Activated CD8-positive, alpha-beta T cell treated with anti-CD3 and anti-CD28 coated beads for 36 hours (primary cell): ENCODE measurements at regions of chr3 and their contacts with region 1.

Region 1: GRCh38 chr3:42831321-42831713 is 22.1 kb downstream of the ACKR2 start:
- DNase-seq: peak; percentile 91
- ATAC-seq: peak; percentile 90
- H3K4me3 Mint-ChIP-seq: no peak overlapping the region
- H3K27ac Mint-ChIP-seq: no peak overlapping the region
- H3K4me1 Mint-ChIP-seq: peaks cover 4% of the 10 kb centered on the region
- H3K27me3 Mint-ChIP-seq: peaks cover 6% of the 10 kb centered on the region
- CTCF ChIP-seq: peak; percentile 70

Region 2: DNA sequence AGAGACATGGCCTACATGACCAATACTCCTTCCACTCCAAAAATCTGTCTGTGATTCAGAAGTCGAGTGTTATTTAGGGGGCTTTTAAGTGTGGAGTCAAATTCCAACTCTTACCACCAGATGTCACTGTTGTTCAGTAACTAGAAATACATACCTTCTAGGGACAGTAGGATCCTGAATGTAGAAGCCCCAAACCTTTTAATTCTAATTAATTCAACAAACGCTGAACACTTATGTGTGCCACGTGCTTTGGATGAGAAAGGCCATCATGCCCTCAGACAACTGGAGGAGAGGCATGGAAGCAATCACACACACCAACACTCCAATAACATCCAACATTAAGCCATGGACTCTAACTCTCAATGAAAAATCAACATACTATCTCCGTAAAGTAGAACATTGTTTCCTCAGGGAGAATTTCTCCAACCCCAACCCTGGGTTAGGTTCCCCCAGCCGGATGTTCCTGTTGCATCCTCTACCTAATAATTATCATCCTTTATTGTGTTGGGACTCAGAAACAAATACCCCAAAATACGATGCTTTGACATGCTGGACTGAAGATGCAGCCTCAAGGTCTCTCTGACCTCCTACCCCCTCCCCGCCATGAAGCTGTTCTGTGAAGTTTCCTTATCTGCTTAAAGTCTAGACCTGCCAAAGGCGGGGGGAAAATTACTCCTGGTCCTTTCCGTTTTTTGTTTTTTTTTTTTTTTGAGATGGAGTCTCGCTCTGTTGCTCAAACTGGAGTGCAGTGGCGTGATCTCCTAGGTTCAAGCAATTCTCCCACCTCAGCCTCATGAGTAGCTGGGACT is 50.2 kb before region 1 on chr3:
- CTCF ChIA-PET with region 1: interaction called, 15 read pairs
- POLR2A ChIA-PET with region 1: no interaction called
- intact Hi-C with region 1: no loop called
- DNase-seq: peak; percentile 32
- ATAC-seq: peak; percentile 97
- H3K4me3 Mint-ChIP-seq: no peak overlapping the region
- H3K27ac Mint-ChIP-seq: no peak overlapping the region
- H3K4me1 Mint-ChIP-seq: no peaks in the 10 kb centered on the region
- H3K27me3 Mint-ChIP-seq: no peaks in the 10 kb centered on the region
- CTCF ChIP-seq: peak; percentile 80

Region 3: DNA sequence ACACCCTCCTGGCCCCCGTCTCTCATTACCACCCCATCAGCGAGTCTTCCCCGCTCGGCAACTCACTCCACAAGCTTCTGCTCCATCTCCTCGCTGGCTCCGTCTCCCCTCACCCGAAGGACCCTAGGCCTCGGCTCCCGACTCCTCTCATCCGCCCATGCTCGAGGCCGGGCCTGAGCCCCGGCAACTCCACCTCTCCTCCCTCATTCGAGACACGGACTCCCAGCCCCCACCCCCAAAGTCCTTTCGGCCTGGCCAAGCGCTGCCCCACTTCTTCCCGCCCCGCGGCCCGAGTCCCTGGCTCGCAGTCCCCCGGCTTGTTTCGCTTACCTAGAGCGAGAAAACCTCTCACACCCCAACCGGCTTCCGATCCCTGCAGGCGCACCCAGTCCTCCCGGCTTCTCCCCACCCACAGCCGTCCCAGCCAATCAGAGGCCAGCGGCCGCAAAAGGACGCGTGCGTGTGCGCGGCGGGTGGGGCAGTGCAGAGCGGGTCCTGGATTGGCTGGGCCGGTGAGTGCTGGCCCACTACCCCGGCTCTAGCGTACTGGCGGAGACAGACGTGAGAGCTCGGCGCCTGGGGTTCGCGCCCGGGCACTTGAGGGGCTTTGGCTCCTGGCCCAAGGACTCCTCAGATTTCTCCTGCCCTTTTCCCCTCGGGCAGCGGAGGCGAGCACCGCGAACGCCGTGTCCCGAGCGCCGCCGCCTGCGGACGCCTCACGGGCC is 27.0 kb before region 1 on chr3 and contains the start of gene HIGD1A:
- CTCF ChIA-PET with region 1: interaction called, 10 read pairs
- POLR2A ChIA-PET with region 1: no interaction called
- intact Hi-C with region 1: no loop called
- DNase-seq: peak; percentile 94
- ATAC-seq: peak; percentile 99
- H3K4me3 Mint-ChIP-seq: peak within 1 kb of the TSS; percentile 98
- H3K27ac Mint-ChIP-seq: peak within 1 kb of the TSS; percentile 90
- H3K4me1 Mint-ChIP-seq: peaks cover 37% of the 10 kb centered on the region
- H3K27me3 Mint-ChIP-seq: peaks cover 12% of the 10 kb centered on the region
- CTCF ChIP-seq: no peak
- total RNA-seq, gene HIGD1A: 58.4 to 60.5 TPM

Region 4: GRCh38 chr3:42819351-42819965 is 11.9 kb before region 1 on chr3:
- CTCF ChIA-PET with region 1: interaction called, 11 read pairs
- POLR2A ChIA-PET with region 1: no interaction called
- intact Hi-C with region 1: no loop called
- DNase-seq: no peak
- ATAC-seq: no peak
- H3K4me3 Mint-ChIP-seq: no peak overlapping the region
- H3K27ac Mint-ChIP-seq: no peak overlapping the region
- H3K4me1 Mint-ChIP-seq: no peaks in the 10 kb centered on the region
- H3K27me3 Mint-ChIP-seq: peaks cover 2% of the 10 kb centered on the region
- CTCF ChIP-seq: no peak

Region 5: DNA sequence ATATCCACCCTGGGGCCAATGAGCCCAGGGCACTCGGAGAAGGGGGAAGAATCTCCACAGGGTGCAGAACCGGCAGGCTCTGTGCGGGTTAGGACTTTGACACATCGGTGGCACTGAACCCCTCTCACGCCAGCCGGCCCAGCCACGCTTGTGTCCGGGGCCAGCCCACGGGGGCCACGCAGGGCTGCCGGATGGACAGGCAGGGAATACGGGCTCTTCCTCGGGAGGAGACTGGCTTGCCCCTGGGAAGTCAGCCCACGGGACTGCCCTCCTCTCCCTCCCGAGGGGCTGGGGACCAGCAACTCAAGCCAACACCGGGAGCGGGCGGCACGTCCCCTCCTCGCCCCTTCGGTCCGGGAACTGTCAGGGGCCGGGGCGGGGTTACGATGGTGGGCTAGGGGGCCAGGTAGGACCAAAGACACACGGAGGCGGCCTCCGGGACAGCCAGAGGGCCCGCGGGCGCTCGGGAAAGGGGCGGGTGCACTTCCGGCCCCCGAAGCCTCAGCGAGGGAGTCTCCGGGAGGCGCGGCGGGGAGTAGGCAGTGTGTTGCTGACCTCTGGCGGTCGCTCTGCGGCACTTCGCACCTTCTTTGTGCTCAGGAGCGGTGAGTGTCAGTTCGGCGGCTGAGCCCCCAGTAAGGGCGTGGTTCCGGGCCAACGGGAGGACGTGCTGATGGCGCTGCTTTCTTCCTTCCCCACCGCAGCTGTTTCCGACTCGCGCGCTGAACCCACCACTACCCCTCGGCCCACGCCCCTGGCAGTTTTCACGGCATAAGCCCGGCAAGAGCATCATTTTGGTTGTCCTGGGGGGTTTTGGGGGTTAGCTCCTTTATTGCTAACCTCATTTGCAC is 49.5 kb after region 1 on chr3:
- CTCF ChIA-PET with region 1: interaction called, 32 read pairs
- POLR2A ChIA-PET with region 1: interaction called, 3 read pairs
- intact Hi-C with region 1: loop called (anchors 2 kb)
- DNase-seq: peak; percentile 95
- ATAC-seq: peak; percentile 97
- H3K4me3 Mint-ChIP-seq: peak overlapping the region; percentile 81
- H3K27ac Mint-ChIP-seq: peak overlapping the region; percentile 90
- H3K4me1 Mint-ChIP-seq: peaks cover 14% of the 10 kb centered on the region
- H3K27me3 Mint-ChIP-seq: no peaks in the 10 kb centered on the region
- CTCF ChIP-seq: peak; percentile 86

Region 6: DNA sequence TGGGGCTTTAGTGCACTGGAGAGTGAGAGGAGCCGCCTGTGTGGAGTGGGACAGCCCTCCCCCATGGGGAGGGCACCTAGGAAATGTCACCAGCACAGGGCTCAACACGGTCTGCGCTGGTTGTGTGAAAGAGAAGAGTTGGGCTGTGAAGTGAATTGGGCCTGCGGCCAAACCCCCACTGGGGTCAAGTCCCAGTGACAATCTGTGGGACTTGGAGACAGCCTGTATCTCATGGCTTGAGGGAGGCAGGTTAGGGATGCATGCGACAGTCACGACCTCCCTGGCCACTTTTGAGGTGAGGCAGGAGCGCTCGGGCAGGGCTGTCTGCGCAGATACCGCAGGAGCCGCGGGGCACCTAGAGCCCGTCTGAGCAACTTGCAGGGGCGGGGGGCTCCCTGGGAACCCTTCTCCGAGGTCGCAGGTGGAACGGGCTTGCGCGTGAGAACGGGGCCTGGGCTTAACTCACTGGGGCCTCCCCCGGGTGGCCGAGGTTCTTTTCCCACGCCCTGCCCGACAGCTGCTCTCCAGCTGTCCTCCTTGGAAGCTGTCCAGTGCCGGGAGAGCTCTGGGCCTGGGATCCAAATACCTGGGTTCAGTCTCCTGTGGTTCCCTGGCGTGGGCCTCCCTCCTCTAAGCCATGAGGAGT is 532.4 kb after region 1 on chr3:
- CTCF ChIA-PET with region 1: no interaction called
- POLR2A ChIA-PET with region 1: no interaction called
- intact Hi-C with region 1: no loop called
- DNase-seq: no peak
- ATAC-seq: no peak
- H3K4me3 Mint-ChIP-seq: no peak overlapping the region
- H3K27ac Mint-ChIP-seq: peak overlapping the region; percentile 11
- H3K4me1 Mint-ChIP-seq: no peaks in the 10 kb centered on the region
- H3K27me3 Mint-ChIP-seq: no peaks in the 10 kb centered on the region
- CTCF ChIP-seq: no peak